Activated T-helper 2 cell treated with anti-CD3 and anti-CD28 coated beads, Interferon-gamma antibody, Interleukin-2, Interleukin-4, amounts not matched to agents 10 μg/mL and 5 μg/mL and 100 μg/mL, durations not matched to agents 14 hours and 24 hours and 36 hours (primary cell): ENCODE measurements at regions of chr15 and their contacts with region 1.

Region 1: GRCh38 chr15:52019388-52020220 is 585 bp downstream of the MAPK6 start:
- DNase-seq: peak; percentile 67
- H3K4me3 Mint-ChIP-seq: peak overlapping the region; percentile 95
- H3K27ac Mint-ChIP-seq: peak overlapping the region; percentile 99
- H3K4me1 Mint-ChIP-seq: peaks cover 28% of the 10 kb centered on the region
- H3K27me3 Mint-ChIP-seq: no peaks in the 10 kb centered on the region

Region 2: GRCh38 chr15:52005748-52006701 is 13.6 kb before region 1 on chr15:
- intact Hi-C with region 1: loop called (anchors 1 kb)
- DNase-seq: no peak
- H3K4me3 Mint-ChIP-seq: peak overlapping the region; percentile 26
- H3K27ac Mint-ChIP-seq: peak overlapping the region; percentile 86
- H3K4me1 Mint-ChIP-seq: peaks cover 70% of the 10 kb centered on the region
- H3K27me3 Mint-ChIP-seq: no peaks in the 10 kb centered on the region

Region 3: DNA sequence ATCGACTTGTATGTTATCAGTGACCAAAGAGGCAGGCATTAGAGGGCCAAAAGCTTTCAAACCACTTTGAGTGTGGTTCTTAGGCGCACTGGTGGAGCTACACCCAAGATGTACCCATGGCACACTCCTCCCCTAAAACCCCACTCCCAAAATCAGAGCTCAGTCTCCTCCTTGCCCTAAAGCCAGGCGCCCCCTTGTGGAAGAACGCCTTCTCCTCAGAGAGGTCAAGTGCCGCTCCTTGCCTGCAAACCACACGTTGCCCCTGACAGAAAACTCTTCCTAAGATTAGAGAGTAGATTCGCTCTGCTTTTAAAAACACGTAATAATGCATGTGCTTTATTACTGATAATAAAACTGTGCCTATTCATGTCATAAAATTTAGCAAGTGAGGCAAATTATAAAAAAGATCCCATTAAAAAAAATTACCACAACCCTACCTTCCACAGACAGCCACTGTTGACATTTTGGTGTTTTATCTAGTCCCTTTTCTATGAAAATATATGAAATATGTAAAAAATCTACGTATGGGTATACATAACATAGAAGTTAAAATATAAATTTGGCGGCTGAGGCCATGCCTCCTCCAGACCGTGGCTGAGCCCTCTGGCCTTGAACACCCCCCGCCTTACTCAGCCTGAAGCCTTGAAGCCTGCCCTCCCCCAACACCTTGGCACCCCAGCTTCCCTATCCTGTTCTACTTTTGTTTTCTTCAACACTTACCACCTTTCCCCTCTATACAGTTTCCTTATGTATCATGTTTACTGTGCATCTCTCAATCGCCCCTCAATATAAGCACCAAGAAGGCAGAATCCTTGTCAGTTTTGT is 59.5 kb after region 1 on chr15:
- intact Hi-C with region 1: loop called (anchors 5 kb)
- DNase-seq: peak; percentile 61
- H3K4me3 Mint-ChIP-seq: no peak overlapping the region
- H3K27ac Mint-ChIP-seq: no peak overlapping the region
- H3K4me1 Mint-ChIP-seq: peaks cover 43% of the 10 kb centered on the region
- H3K27me3 Mint-ChIP-seq: no peaks in the 10 kb centered on the region

Region 4: DNA sequence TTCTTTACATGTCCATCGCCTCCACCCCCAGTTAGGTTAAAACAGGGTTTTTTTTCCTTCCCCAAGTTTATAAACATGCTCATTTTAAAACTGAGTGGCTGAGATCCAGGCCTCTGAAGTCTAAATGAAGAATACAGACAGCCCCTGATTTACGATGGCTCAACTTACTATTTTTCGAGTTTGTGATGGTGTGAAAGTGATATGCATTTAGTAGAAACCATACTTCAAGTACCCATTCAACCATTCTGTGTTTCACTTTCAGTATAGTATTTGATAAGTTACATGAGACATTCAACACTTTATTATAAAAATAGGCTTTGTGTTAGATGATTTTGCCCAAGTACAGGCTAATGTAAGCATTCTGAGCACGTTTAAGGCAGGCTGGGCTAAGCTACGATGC is 202.1 kb after region 1 on chr15:
- intact Hi-C with region 1: loop called (anchors 5 kb)
- DNase-seq: no peak
- H3K4me3 Mint-ChIP-seq: peak overlapping the region; percentile 77
- H3K27ac Mint-ChIP-seq: peak overlapping the region; percentile 82
- H3K4me1 Mint-ChIP-seq: peaks cover 36% of the 10 kb centered on the region
- H3K27me3 Mint-ChIP-seq: no peaks in the 10 kb centered on the region